PC-3 (cell line): ENCODE measurements at regions of chr11 and their contacts with region 1.

Region 1: DNA sequence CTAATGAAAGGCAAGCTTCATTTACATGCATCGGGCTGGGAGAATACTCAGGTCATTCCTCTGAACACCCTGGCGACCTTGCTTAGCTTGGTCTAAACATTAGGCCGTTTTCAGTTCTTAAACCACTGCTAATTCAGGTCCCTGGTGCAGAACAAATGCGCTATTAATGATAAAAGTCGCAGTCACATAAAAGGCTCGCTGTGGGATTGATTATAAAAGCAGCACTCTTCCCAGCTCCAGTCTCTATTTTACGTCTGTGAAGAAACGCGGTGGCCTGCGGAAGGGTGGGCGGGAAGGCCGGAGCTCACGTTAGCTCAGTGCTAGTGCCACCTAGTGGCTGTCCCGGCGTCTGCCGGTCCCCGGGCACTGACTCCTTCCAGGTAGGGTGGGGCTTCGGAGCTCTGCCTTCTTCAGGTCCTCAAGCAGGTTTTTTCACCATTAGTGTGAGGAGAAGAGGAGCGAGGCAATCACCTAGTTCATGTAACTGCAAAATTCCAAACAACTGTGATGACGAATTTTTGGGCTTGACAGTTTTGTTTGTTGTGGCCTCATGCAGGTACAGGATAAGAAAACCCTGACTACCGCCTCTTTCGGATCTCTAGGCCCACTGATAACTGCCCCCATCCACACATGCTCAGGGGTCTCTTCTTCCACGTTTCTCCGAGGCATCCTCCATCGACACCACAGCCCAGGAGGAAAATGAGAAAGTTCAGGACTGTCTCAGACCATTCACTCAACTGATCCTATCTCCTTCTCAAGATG is 66.5 kb upstream of the CLMP start:
- DNase-seq: peak; percentile 96
- ATAC-seq: peak; percentile 92
- H3K4me3 ChIP-seq: peak overlapping the region; percentile 36; the same call in 1 of the 2 replicates
- H3K27ac ChIP-seq: no peak overlapping the region
- H3K4me1 ChIP-seq: peaks cover 24% of the 10 kb centered on the region
- H3K27me3 ChIP-seq: no peaks in the 10 kb centered on the region
- CTCF ChIP-seq: peak; percentile 99

Region 2: GRCh38 chr11:123103326-123103980 is 158.1 kb before region 1 on chr11:
- CTCF ChIA-PET with region 1: interaction called, 30 read pairs
- POLR2A ChIA-PET with region 1: no interaction called
- intact Hi-C with region 1: no loop called
- DNase-seq: peak; percentile 87
- ATAC-seq: peak; percentile 75
- H3K4me3 ChIP-seq: no peak overlapping the region
- H3K27ac ChIP-seq: no peak overlapping the region
- H3K4me1 ChIP-seq: 0 out of 2 replicates have a peak, but pooled peaks cover 4% of the 10 kb centered on the region
- H3K27me3 ChIP-seq: no peaks in the 10 kb centered on the region
- CTCF ChIP-seq: peak; percentile 93

Region 3: GRCh38 chr11:123110356-123110755 is 151.2 kb before region 1 on chr11:
- CTCF ChIA-PET with region 1: interaction called, 10 read pairs
- POLR2A ChIA-PET with region 1: no interaction called
- intact Hi-C with region 1: no loop called
- DNase-seq: no peak
- ATAC-seq: no peak
- H3K4me3 ChIP-seq: no peak overlapping the region
- H3K27ac ChIP-seq: no peak overlapping the region
- H3K4me1 ChIP-seq: peaks cover 7% of the 10 kb centered on the region
- H3K27me3 ChIP-seq: no peaks in the 10 kb centered on the region
- CTCF ChIP-seq: no peak

Region 4: GRCh38 chr11:123286761-123287160 is 25.2 kb after region 1 on chr11:
- CTCF ChIA-PET with region 1: interaction called, 12 read pairs
- POLR2A ChIA-PET with region 1: no interaction called
- intact Hi-C with region 1: no loop called
- DNase-seq: no peak
- ATAC-seq: no peak
- H3K4me3 ChIP-seq: no peak overlapping the region
- H3K27ac ChIP-seq: no peak overlapping the region
- H3K4me1 ChIP-seq: no peaks in the 10 kb centered on the region
- H3K27me3 ChIP-seq: peaks cover 32% of the 10 kb centered on the region
- CTCF ChIP-seq: no peak

Region 5: GRCh38 chr11:123391646-123392348 is 130.3 kb after region 1 on chr11:
- CTCF ChIA-PET with region 1: interaction called, 15 read pairs
- POLR2A ChIA-PET with region 1: no interaction called
- intact Hi-C with region 1: no loop called
- DNase-seq: peak; percentile 9
- ATAC-seq: peak; percentile 11; the same call in 1 of the 2 replicates
- H3K4me3 ChIP-seq: no peak overlapping the region
- H3K27ac ChIP-seq: no peak overlapping the region
- H3K4me1 ChIP-seq: no peaks in the 10 kb centered on the region
- H3K27me3 ChIP-seq: no peaks in the 10 kb centered on the region
- CTCF ChIP-seq: no peak